B cell (primary cell): ENCODE measurements at regions of chr16 and their contacts with region 1.

Region 1: DNA sequence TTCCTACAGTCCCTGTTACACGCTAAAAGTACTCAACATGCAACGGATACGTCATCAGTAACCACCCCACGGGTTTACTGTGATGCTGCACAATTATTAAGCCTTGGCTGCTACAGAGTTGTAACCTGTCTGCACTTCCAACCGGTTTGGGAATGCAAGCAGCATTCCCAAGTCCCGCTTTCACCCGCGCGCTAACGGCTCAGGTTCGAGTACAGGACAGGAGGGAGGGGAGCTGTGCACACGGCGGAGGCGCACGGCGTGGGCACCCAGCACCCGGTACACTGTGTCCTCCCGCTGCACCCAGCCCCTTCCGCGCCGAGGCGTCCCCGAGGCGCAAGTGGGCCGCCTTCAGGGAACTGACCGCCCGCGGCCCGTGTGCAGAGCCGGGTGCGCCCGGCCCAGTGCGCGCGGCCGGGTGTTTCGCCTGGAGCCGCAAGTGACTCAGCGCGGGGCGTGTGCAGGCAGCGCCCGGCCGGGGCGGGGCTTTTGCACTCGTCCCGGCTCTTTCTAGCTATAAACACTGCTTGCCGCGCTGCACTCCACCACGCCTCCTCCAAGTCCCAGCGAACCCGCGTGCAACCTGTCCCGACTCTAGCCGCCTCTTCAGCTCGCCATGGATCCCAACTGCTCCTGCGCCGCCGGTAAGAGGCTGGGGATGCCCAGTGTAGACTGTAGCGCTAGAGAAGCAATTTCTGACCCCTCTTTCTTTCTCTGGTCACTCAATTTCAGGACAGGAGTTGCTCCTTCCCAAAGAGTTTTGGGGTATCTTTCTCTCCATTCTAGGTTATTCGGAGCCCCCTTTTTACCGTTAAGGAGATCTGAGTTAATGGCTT is at the start of gene MT2A:
- DNase-seq: peak; percentile 85
- ATAC-seq: peak; percentile 87
- H3K4me3 ChIP-seq: peak within 1 kb of the TSS; percentile 60 to 77 (median 73)
- H3K4me3 Mint-ChIP-seq: peak within 1 kb of the TSS; percentile 97
- H3K27ac ChIP-seq: peak within 1 kb of the TSS in 1 of 2 donors; percentile 12
- H3K27ac Mint-ChIP-seq: peak within 1 kb of the TSS; percentile 88
- H3K4me1 ChIP-seq: peaks cover 21 to 41% of the 10 kb centered on the region in 2 donors
- H3K4me1 Mint-ChIP-seq: peaks cover 37% of the 10 kb centered on the region
- H3K27me3 ChIP-seq: no peaks in the 10 kb centered on the region
- H3K27me3 Mint-ChIP-seq: peaks cover 4% of the 10 kb centered on the region
- CTCF ChIP-seq: no peak
- total RNA-seq, gene MT2A: 6.7 and 14.4 TPM in 2 replicates

Region 2: GRCh38 chr16:56324406-56324805 is 283.9 kb before region 1 on chr16:
- CTCF ChIA-PET with region 1: no interaction called
- POLR2A ChIA-PET with region 1: no interaction called
- intact Hi-C with region 1: no loop called
- DNase-seq: no peak
- ATAC-seq: no peak
- H3K4me3 ChIP-seq: no peak overlapping the region
- H3K4me3 Mint-ChIP-seq: no peak overlapping the region
- H3K27ac ChIP-seq: no peak overlapping the region
- H3K27ac Mint-ChIP-seq: no peak overlapping the region
- H3K4me1 ChIP-seq: peaks cover 0 to 6% of the 10 kb centered on the region in 2 donors
- H3K4me1 Mint-ChIP-seq: peaks cover 5% of the 10 kb centered on the region
- H3K27me3 ChIP-seq: no peaks in the 10 kb centered on the region
- H3K27me3 Mint-ChIP-seq: no peaks in the 10 kb centered on the region
- CTCF ChIP-seq: no peak

Region 3: GRCh38 chr16:56450986-56451752 is 157.1 kb before region 1 on chr16 and contains the starts of genes NUDT21 and OGFOD1:
- CTCF ChIA-PET with region 1: interaction called, 3 read pairs
- POLR2A ChIA-PET with region 1: no interaction called
- intact Hi-C with region 1: loop called (anchors 1 kb)
- DNase-seq: peak; percentile 95
- ATAC-seq: peak; percentile 99
- H3K4me3 ChIP-seq: peak within 1 kb of the TSS; percentile 68 to 88 (median 85)
- H3K4me3 Mint-ChIP-seq: peak within 1 kb of the TSS; percentile 93
- H3K27ac ChIP-seq: peak within 1 kb of the TSS; percentile 53 to 71
- H3K27ac Mint-ChIP-seq: peak within 1 kb of the TSS; percentile 90
- H3K4me1 ChIP-seq: peaks cover 24 to 28% of the 10 kb centered on the region in 2 donors
- H3K4me1 Mint-ChIP-seq: peaks cover 38% of the 10 kb centered on the region
- H3K27me3 ChIP-seq: no peaks in the 10 kb centered on the region
- H3K27me3 Mint-ChIP-seq: no peaks in the 10 kb centered on the region
- CTCF ChIP-seq: no peak
- total RNA-seq, gene NUDT21: 85.5 and 89.4 TPM in 2 replicates
- total RNA-seq, gene OGFOD1: 28.7 and 30.9 TPM in 2 replicates

Region 4: GRCh38 chr16:56576585-56577293 is 31.5 kb before region 1 on chr16:
- CTCF ChIA-PET with region 1: interaction called, 5 read pairs
- POLR2A ChIA-PET with region 1: no interaction called
- intact Hi-C with region 1: loop called (anchors 2 kb)
- DNase-seq: peak; percentile 76
- ATAC-seq: peak; percentile 98
- H3K4me3 ChIP-seq: no peak overlapping the region
- H3K4me3 Mint-ChIP-seq: no peak overlapping the region
- H3K27ac ChIP-seq: no peak overlapping the region
- H3K27ac Mint-ChIP-seq: no peak overlapping the region
- H3K4me1 ChIP-seq: peaks cover 0 to 3% of the 10 kb centered on the region in 2 donors
- H3K4me1 Mint-ChIP-seq: peaks cover 1% of the 10 kb centered on the region
- H3K27me3 ChIP-seq: no peaks in the 10 kb centered on the region
- H3K27me3 Mint-ChIP-seq: peaks cover 6% of the 10 kb centered on the region
- CTCF ChIP-seq: peak; percentile 72

Region 5: DNA sequence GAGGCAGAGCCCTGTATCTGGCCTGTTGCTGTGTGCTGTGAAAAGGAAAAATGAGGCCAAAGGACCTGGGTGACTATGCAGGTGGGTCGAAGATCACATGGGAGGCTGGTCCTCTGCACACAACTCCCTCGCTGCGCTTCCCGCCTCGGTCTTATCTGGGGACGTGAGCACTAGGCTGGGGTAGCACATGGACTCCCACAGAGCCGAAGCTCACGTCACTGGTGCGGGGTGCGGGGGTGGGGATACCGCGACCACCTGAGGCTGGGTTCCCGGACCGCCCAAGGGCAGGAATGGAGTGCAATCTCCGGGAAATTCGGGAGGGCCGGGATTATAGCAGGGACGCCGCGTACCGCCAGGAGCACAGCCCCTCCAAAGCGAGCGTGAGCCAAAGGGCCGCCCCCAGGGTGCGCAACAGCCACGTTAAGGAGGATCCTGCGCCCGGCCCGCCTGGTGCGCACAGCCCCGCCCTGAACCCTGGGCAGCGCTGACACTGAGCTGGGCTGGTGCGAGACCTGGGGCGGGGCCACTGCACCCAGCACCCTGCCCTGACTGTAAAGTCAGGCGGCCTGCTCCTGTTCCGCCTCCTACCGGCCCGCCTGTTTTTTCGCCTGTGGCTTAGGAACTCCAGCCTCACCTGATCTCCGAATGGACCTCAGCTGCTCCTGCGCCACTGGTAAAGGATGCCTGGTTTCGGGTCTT is 35.0 kb after region 1 on chr16:
- CTCF ChIA-PET with region 1: interaction called, 3 read pairs
- POLR2A ChIA-PET with region 1: interaction called, 3 read pairs
- intact Hi-C with region 1: loop called (anchors 1 kb)
- DNase-seq: peak; percentile 57
- ATAC-seq: peak; percentile 100
- H3K4me3 ChIP-seq: peak overlapping the region in 3 of 5 experiments; percentile 17 to 33 (median 33)
- H3K4me3 Mint-ChIP-seq: peak overlapping the region; percentile 67
- H3K27ac ChIP-seq: no peak overlapping the region
- H3K27ac Mint-ChIP-seq: peak overlapping the region; percentile 6
- H3K4me1 ChIP-seq: peaks cover 18 to 21% of the 10 kb centered on the region in 2 donors
- H3K4me1 Mint-ChIP-seq: peaks cover 17% of the 10 kb centered on the region
- H3K27me3 ChIP-seq: peaks cover 0 to 68% (median 25%) of the 10 kb centered on the region in 4 experiments
- H3K27me3 Mint-ChIP-seq: peaks cover 70% of the 10 kb centered on the region
- CTCF ChIP-seq: no peak

Region 6: GRCh38 chr16:56681939-56682702 is 73.9 kb after region 1 on chr16 and contains the start of gene MT1X:
- CTCF ChIA-PET with region 1: no interaction called
- POLR2A ChIA-PET with region 1: no interaction called
- intact Hi-C with region 1: loop called (anchors 1 kb)
- DNase-seq: peak; percentile 76
- ATAC-seq: peak; percentile 98
- H3K4me3 ChIP-seq: peak within 1 kb of the TSS; percentile 55 to 74 (median 59)
- H3K4me3 Mint-ChIP-seq: peak within 1 kb of the TSS; percentile 95
- H3K27ac ChIP-seq: peak within 1 kb of the TSS in 1 of 2 donors; percentile 55
- H3K27ac Mint-ChIP-seq: peak within 1 kb of the TSS; percentile 81
- H3K4me1 ChIP-seq: peaks cover 14 to 15% of the 10 kb centered on the region in 2 donors
- H3K4me1 Mint-ChIP-seq: peaks cover 21% of the 10 kb centered on the region
- H3K27me3 ChIP-seq: peaks cover 0 to 14% (median 4%) of the 10 kb centered on the region in 4 experiments
- H3K27me3 Mint-ChIP-seq: peaks cover 10% of the 10 kb centered on the region
- CTCF ChIP-seq: no peak
- total RNA-seq, gene MT1X: 13.0 and 17.2 TPM in 2 replicates

Region 7: GRCh38 chr16:56911771-56912571 is 303.7 kb after region 1 on chr16:
- CTCF ChIA-PET with region 1: no interaction called
- POLR2A ChIA-PET with region 1: no interaction called
- intact Hi-C with region 1: loop called (anchors 10 kb)
- DNase-seq: peak; percentile 87
- ATAC-seq: peak; percentile 87
- H3K4me3 ChIP-seq: peak overlapping the region in 3 of 5 experiments; percentile 12 to 48 (median 14)
- H3K4me3 Mint-ChIP-seq: peak overlapping the region; percentile 73
- H3K27ac ChIP-seq: peak overlapping the region; percentile 86 to 97
- H3K27ac Mint-ChIP-seq: peak overlapping the region; percentile 99
- H3K4me1 ChIP-seq: peaks cover 54 to 69% of the 10 kb centered on the region in 2 donors
- H3K4me1 Mint-ChIP-seq: peaks cover 69% of the 10 kb centered on the region
- H3K27me3 ChIP-seq: no peaks in the 10 kb centered on the region
- H3K27me3 Mint-ChIP-seq: no peaks in the 10 kb centered on the region
- CTCF ChIP-seq: no peak

Region 8: GRCh38 chr16:57244767-57245471 is 636.7 kb after region 1 on chr16 and contains the start of gene ARL2BP:
- CTCF ChIA-PET with region 1: no interaction called
- POLR2A ChIA-PET with region 1: no interaction called
- intact Hi-C with region 1: loop called (anchors 2 kb)
- DNase-seq: peak; percentile 96
- ATAC-seq: peak; percentile 95
- H3K4me3 ChIP-seq: peak within 1 kb of the TSS; percentile 74 to 85 (median 79)
- H3K4me3 Mint-ChIP-seq: peak within 1 kb of the TSS; percentile 99
- H3K27ac ChIP-seq: peak within 1 kb of the TSS; percentile 79 to 92
- H3K27ac Mint-ChIP-seq: peak within 1 kb of the TSS; percentile 96
- H3K4me1 ChIP-seq: peaks cover 26 to 33% of the 10 kb centered on the region in 2 donors
- H3K4me1 Mint-ChIP-seq: peaks cover 34% of the 10 kb centered on the region
- H3K27me3 ChIP-seq: no peaks in the 10 kb centered on the region
- H3K27me3 Mint-ChIP-seq: no peaks in the 10 kb centered on the region
- CTCF ChIP-seq: no peak
- total RNA-seq, gene ARL2BP: 36.8 and 38.8 TPM in 2 replicates